ENCODE measurements at regions of chr1 and their contacts with region 1.

Region 1: DNA sequence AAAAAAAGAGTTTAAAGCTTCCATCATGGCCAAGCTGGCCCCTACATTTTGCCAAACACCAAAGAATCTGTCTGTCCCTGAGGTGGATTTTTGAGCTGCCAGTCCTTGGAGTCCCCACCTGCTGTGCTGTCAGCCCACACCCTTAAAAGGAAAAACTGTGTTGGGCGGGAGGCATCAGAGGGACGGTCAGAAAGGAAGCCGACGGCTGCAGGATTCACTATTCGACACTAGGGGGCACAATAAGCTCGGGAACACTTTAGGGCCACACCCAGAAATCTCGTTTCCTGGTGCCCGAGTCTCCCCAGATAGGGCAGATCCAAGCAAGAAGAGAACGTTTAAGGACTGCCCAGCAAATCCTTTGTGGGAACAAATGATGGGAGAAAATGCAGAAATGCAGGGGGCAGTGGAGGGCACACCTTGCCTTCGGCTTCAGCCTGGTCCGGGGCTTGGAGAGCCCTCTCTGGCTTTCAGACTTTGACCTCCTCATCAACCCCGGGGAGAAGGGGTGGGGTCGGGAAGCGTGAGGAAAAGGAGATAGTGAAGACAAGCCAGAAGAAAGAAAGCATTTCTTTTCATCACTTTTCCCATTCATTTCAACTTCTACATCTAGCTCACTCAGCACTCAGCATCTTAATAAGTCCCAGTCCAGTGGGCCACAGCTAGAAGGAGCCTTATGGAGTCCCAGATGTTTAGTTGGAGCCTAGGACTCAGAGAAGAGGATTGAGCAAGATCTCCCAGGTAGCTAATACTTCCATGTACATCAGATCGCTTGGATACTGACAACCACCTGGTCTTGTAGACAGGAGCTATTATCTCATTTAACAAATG is 5.0 kb upstream of the CTTNBP2NL start:
- DNase-seq: peak; percentile 51 to 89 (median 75)
- ATAC-seq: peak; percentile 89
- H3K4me3 ChIP-seq: no peak overlapping the region
- H3K4me3 Mint-ChIP-seq: no peak overlapping the region
- H3K27ac ChIP-seq: no peak overlapping the region
- H3K27ac Mint-ChIP-seq: no peak overlapping the region
- H3K4me1 ChIP-seq: peaks cover 10% of the 10 kb centered on the region
- H3K4me1 Mint-ChIP-seq: peaks cover 10% of the 10 kb centered on the region
- H3K27me3 ChIP-seq: peaks cover 7 to 11% of the 10 kb centered on the region in 2 experiments
- H3K27me3 Mint-ChIP-seq: peaks cover 46% of the 10 kb centered on the region
- CTCF ChIP-seq: peak; percentile 85

Region 2: DNA sequence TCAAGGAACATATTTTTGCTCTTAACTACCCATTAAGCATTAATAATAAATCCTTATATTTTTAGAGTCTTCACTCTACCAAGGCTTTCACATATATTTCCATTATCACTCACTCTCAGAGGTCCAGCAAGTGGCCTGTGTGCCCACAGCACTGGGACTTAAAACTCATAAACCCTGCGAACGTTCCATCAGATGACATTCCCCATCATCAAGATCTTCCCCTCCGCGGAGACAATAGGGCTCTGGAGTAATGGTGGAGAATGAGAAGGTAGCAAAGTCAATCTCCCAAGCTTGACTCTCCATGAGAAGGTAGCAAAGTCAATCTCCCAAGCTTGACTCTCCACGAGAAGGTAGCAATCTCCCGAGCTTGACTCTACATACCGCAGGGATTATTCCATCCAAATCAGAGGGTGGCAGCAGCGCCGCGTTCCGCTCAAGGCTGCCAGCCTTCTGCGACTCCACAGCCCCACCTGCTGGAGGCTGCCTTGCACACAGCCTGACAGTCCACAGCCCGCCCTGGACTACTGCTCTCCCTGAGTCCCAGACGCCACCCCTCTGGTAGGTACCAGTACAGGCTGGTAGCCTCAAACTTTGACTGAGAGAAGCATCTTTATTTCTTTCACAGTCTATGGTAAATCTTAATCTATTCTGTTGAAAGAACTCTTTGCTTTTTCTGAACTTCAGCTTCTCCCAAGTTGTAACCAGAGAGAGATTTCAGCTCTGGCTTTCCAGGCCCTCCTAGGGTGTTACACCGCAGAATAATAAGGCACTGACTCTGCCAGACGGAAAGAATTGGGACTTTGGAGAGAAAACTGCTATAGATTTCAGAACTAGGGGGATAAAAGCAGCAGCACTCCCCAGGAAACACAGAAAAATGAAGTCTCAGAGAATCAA is 21.4 kb before region 1 on chr1:
- CTCF ChIA-PET with region 1: interaction called, 11 read pairs
- POLR2A ChIA-PET with region 1: no interaction called
- intact Hi-C with region 1: no loop called
- DNase-seq: peak; percentile 71 to 87 (median 83)
- ATAC-seq: peak; percentile 100
- H3K4me3 ChIP-seq: no peak overlapping the region
- H3K4me3 Mint-ChIP-seq: no peak overlapping the region
- H3K27ac ChIP-seq: no peak overlapping the region
- H3K27ac Mint-ChIP-seq: no peak overlapping the region
- H3K4me1 ChIP-seq: no peaks in the 10 kb centered on the region
- H3K4me1 Mint-ChIP-seq: peaks cover 4% of the 10 kb centered on the region
- H3K27me3 ChIP-seq: peaks cover 0 to 4% of the 10 kb centered on the region in 2 experiments
- H3K27me3 Mint-ChIP-seq: peaks cover 42% of the 10 kb centered on the region
- CTCF ChIP-seq: peak; percentile 93

Region 3: GRCh38 chr1:112466078-112466660 is 75.2 kb after region 1 on chr1:
- CTCF ChIA-PET with region 1: interaction called, 111 read pairs
- POLR2A ChIA-PET with region 1: interaction called, 3 read pairs
- intact Hi-C with region 1: loop called (anchors 1 kb)
- DNase-seq: peak; percentile 66 to 90 (median 83)
- ATAC-seq: peak; percentile 95
- H3K4me3 ChIP-seq: peak overlapping the region; percentile 31 to 42
- H3K4me3 Mint-ChIP-seq: peak overlapping the region; percentile 80
- H3K27ac ChIP-seq: no peak overlapping the region
- H3K27ac Mint-ChIP-seq: no peak overlapping the region
- H3K4me1 ChIP-seq: peaks cover 8% of the 10 kb centered on the region
- H3K4me1 Mint-ChIP-seq: peaks cover 14% of the 10 kb centered on the region
- H3K27me3 ChIP-seq: peaks cover 0 to 9% of the 10 kb centered on the region in 2 experiments
- H3K27me3 Mint-ChIP-seq: peaks cover 22% of the 10 kb centered on the region
- CTCF ChIP-seq: peak; percentile 68

Region 4: GRCh38 chr1:112706908-112707663 is 316.1 kb after region 1 on chr1 and contains the start of gene RHOC:
- CTCF ChIA-PET with region 1: interaction called, 32 read pairs
- POLR2A ChIA-PET with region 1: no interaction called
- intact Hi-C with region 1: loop called (anchors 1 to 2 kb)
- DNase-seq: peak; percentile 17 to 83 (median 61)
- ATAC-seq: peak; percentile 50
- H3K4me3 ChIP-seq: peak within 1 kb of the TSS; percentile 23 to 62
- H3K4me3 Mint-ChIP-seq: peak within 1 kb of the TSS; percentile 83
- H3K27ac ChIP-seq: peak within 1 kb of the TSS in 1 of 2 experiments; percentile 73
- H3K27ac Mint-ChIP-seq: no peak within 1 kb of the TSS
- H3K4me1 ChIP-seq: peaks cover 28% of the 10 kb centered on the region
- H3K4me1 Mint-ChIP-seq: peaks cover 34% of the 10 kb centered on the region
- H3K27me3 ChIP-seq: no peaks in the 10 kb centered on the region
- H3K27me3 Mint-ChIP-seq: no peaks in the 10 kb centered on the region
- CTCF ChIP-seq: peak; percentile 67
- total RNA-seq, gene RHOC: 7.9 TPM

Region 5: DNA sequence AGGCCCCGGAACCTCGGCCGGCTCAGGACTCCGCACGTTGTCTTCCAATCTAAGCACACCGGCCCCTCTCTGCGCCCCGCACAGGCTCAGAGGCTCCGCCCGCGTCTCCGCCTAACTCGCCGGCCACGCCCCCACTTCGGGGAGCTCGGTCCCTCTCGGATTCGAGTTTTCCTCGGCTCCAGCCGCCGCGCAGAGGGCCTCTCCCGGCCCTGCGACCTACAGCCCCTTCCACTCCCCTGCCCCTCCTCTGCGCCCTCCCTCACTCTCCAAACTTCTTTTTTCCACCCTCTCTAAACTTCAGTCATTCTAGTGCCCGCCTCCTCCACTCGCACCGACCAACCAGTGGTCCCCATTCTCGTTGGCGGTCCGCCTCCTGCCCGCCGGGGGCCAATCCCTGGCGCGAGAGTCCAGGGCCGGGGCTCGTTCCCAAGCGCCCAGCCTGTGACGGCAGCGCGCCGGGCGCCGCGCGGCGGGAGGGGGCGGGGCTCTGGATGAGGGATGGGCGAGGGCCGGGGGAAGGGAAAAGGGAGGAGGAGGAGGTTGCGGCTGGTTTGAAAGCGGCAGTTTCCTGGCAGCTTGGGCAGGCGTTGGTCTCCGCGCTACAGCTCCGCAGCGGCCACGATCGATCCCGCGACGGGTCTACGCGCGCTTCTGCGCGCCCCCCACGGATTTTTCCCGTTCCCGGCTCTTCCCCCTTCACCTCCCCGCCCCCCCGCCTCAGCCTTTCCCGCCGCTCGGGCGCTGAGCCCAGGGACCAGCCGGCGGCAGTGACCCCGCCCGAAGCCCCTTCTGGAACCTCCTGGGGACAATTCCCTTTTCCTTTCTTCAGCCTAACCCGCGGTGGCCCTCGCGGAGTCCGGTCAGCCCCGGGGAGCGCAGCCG is 999.2 kb after region 1 on chr1 and contains the start of gene MAGI3:
- CTCF ChIA-PET with region 1: no interaction called
- POLR2A ChIA-PET with region 1: no interaction called
- intact Hi-C with region 1: loop called in 1 of 2 experiments (anchors 10 kb)
- DNase-seq: peak; percentile 70 to 93 (median 88)
- ATAC-seq: peak; percentile 91
- H3K4me3 ChIP-seq: peak within 1 kb of the TSS; percentile 94 to 97
- H3K4me3 Mint-ChIP-seq: peak within 1 kb of the TSS; percentile 95
- H3K27ac ChIP-seq: peak within 1 kb of the TSS; percentile 30 to 47
- H3K27ac Mint-ChIP-seq: peak within 1 kb of the TSS; percentile 84
- H3K4me1 ChIP-seq: peaks cover 13% of the 10 kb centered on the region
- H3K4me1 Mint-ChIP-seq: peaks cover 24% of the 10 kb centered on the region
- H3K27me3 ChIP-seq: peaks cover 0 to 5% of the 10 kb centered on the region in 2 experiments
- H3K27me3 Mint-ChIP-seq: peaks cover 12% of the 10 kb centered on the region
- CTCF ChIP-seq: no peak
- total RNA-seq, gene MAGI3: 1.7 to 3.2 TPM

Measured in CD8-positive, alpha-beta T cell (primary cell).